Caco-2 (cell line): ENCODE measurements at regions of chr14 and their contacts with region 1.

Region 1: GRCh38 chr14:22852940-22853767 is 16.8 kb downstream of the MMP14 start:
- DNase-seq: peak; percentile 89 to 92
- H3K4me3 ChIP-seq: peak overlapping the region; percentile 35
- H3K4me3 Mint-ChIP-seq: peak overlapping the region; percentile 69
- H3K27ac Mint-ChIP-seq: peak overlapping the region; percentile 68
- H3K4me1 ChIP-seq: peaks cover 25% of the 10 kb centered on the region
- H3K4me1 Mint-ChIP-seq: peaks cover 7% of the 10 kb centered on the region
- H3K27me3 ChIP-seq: no peaks in the 10 kb centered on the region
- H3K27me3 Mint-ChIP-seq: no peaks in the 10 kb centered on the region
- CTCF ChIP-seq: peak; percentile 87 to 91

Region 2: DNA sequence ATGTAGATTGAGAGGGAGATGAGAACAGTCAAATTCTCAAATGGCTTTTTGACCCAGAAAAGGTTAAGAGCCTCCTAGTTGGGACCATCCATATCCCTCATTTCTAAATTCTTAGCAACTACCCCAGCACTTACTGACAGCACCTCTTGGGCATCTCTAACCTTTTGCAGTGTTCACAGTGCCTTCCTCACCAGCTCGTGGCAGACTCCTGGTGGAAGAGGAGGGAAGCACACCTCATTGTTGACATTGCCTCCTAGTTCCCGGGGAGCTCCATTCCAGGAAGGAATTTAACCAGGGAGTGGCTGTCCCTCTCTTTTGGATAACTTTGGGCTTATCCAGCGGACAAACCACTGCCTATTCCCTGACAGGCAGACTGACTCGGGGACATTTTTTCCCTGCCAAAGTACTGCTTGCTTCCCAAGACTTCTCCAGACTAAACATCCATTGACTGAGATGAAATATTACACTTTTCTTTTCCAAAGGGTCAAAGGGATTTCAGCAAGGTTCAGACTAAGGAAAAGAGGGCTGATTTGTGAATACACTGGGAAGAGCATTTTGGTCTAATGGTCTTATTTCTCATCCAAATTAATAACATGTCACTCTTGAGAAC is 200.0 kb before region 1 on chr14:
- CTCF ChIA-PET with region 1: interaction called, 11 read pairs
- POLR2A ChIA-PET with region 1: no interaction called
- intact Hi-C with region 1: loop called (anchors 1 kb)
- DNase-seq: peak; percentile 85 to 86
- H3K4me3 ChIP-seq: no peak overlapping the region
- H3K4me3 Mint-ChIP-seq: no peak overlapping the region
- H3K27ac Mint-ChIP-seq: peak overlapping the region; percentile 68
- H3K4me1 ChIP-seq: peaks cover 31% of the 10 kb centered on the region
- H3K4me1 Mint-ChIP-seq: peaks cover 12% of the 10 kb centered on the region
- H3K27me3 ChIP-seq: no peaks in the 10 kb centered on the region
- H3K27me3 Mint-ChIP-seq: no peaks in the 10 kb centered on the region
- CTCF ChIP-seq: peak; percentile 80 to 91

Region 3: DNA sequence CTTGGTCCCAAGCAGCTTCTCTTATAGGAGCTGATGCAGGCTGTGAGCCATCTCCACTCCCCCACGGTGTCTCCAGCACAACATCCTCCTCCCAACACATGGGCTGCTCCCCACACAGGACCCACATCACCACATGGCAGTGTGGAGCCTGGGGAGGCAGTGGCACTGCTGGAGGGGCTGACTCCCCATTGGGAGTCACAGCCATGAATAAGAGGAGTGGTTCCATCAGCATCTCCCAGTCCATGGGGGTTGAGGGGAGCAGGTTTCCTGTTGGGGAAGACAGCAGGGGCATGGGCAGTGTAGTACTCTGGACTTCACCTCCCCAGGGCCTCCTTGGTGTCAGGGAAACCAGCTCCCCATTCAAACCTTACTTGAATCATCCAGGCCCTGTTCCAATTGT is 127.1 kb before region 1 on chr14:
- CTCF ChIA-PET with region 1: no interaction called
- POLR2A ChIA-PET with region 1: no interaction called
- intact Hi-C with region 1: no loop called
- DNase-seq: no peak
- H3K4me3 ChIP-seq: no peak overlapping the region
- H3K4me3 Mint-ChIP-seq: no peak overlapping the region
- H3K27ac Mint-ChIP-seq: no peak overlapping the region
- H3K4me1 ChIP-seq: no peaks in the 10 kb centered on the region
- H3K4me1 Mint-ChIP-seq: no peaks in the 10 kb centered on the region
- H3K27me3 ChIP-seq: no peaks in the 10 kb centered on the region
- H3K27me3 Mint-ChIP-seq: no peaks in the 10 kb centered on the region
- CTCF ChIP-seq: no peak

Region 4: DNA sequence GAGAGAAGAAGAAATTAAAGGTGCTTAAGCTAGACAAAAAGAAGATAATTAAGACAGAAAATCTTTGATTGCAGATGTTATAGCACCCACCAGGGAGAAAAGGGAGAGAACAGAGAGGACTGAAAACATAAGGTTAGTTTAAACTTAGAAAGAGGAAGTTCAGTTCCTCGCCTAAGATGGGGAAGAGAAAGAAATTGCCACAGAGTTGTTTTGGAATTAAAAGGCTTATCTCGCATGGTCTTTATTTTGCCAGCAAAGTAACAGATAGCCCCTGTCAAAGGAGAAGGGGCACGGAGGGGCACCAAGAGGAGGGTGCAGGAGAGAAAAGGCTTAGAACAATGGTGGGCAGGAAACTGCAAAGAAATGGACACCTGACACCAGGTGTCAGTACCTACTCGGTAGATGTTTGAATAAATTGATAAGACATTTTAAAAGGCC is 104.5 kb before region 1 on chr14:
- CTCF ChIA-PET with region 1: no interaction called
- POLR2A ChIA-PET with region 1: no interaction called
- intact Hi-C with region 1: loop called (anchors 1 kb)
- DNase-seq: no peak
- H3K4me3 ChIP-seq: no peak overlapping the region
- H3K4me3 Mint-ChIP-seq: no peak overlapping the region
- H3K27ac Mint-ChIP-seq: no peak overlapping the region
- H3K4me1 ChIP-seq: peaks cover 20% of the 10 kb centered on the region
- H3K4me1 Mint-ChIP-seq: peaks cover 31% of the 10 kb centered on the region
- H3K27me3 ChIP-seq: no peaks in the 10 kb centered on the region
- H3K27me3 Mint-ChIP-seq: no peaks in the 10 kb centered on the region
- CTCF ChIP-seq: peak in 1 of 2 experiments; percentile 4

Region 5: GRCh38 chr14:22781586-22781991 is 71.6 kb before region 1 on chr14:
- CTCF ChIA-PET with region 1: no interaction called
- POLR2A ChIA-PET with region 1: no interaction called
- intact Hi-C with region 1: loop called (anchors 1 kb)
- DNase-seq: no peak
- H3K4me3 ChIP-seq: no peak overlapping the region
- H3K4me3 Mint-ChIP-seq: peak overlapping the region; percentile 5
- H3K27ac Mint-ChIP-seq: peak overlapping the region; percentile 30
- H3K4me1 ChIP-seq: peaks cover 14% of the 10 kb centered on the region
- H3K4me1 Mint-ChIP-seq: peaks cover 10% of the 10 kb centered on the region
- H3K27me3 ChIP-seq: no peaks in the 10 kb centered on the region
- H3K27me3 Mint-ChIP-seq: no peaks in the 10 kb centered on the region
- CTCF ChIP-seq: no peak

Region 6: GRCh38 chr14:22836301-22837113 is 16.6 kb before region 1 on chr14 and contains the start of gene MMP14:
- CTCF ChIA-PET with region 1: interaction called, 9 read pairs
- POLR2A ChIA-PET with region 1: no interaction called
- intact Hi-C with region 1: loop called (anchors 1 kb)
- DNase-seq: peak; percentile 71 to 77
- H3K4me3 ChIP-seq: peak within 1 kb of the TSS; percentile 74
- H3K4me3 Mint-ChIP-seq: peak within 1 kb of the TSS; percentile 85
- H3K27ac Mint-ChIP-seq: peak within 1 kb of the TSS; percentile 87
- H3K4me1 ChIP-seq: peaks cover 16% of the 10 kb centered on the region
- H3K4me1 Mint-ChIP-seq: peaks cover 17% of the 10 kb centered on the region
- H3K27me3 ChIP-seq: no peaks in the 10 kb centered on the region
- H3K27me3 Mint-ChIP-seq: no peaks in the 10 kb centered on the region
- CTCF ChIP-seq: peak; percentile 50 to 75
- total RNA-seq, gene MMP14: 57.2 and 62.9 TPM in 2 replicates

Region 7: DNA sequence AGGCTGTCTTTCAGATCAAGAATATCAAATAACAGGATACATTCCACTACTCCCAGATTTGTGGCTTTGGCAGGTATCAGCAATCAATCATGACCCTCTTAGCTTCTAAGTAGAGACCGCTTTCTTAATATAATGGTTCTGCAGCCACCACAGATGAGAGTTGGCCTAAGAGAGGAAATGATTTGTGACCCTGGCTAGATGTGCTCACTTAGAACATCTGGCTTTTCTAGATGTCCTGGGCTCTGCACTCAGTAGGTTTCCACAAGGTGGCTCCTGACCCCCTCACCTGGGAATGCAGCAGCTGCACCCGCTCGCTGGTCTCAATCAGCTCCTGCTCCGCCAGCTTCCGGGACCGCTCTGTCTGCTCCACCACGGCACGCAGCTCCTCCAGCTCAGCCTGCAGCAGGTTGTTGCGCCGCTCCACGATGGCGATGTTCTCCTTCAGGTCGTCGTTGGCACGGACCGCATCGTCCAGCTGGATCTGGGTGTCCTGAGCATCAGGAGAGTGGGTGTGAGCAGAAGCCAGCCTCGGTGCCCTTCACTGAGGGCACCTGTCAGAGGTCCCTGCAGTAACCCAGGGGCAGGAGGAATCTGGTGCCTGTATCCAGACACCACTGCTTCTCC is 532.6 kb after region 1 on chr14:
- CTCF ChIA-PET with region 1: no interaction called
- POLR2A ChIA-PET with region 1: no interaction called
- intact Hi-C with region 1: no loop called
- DNase-seq: peak in 1 of 2 experiments; percentile 13
- H3K4me3 ChIP-seq: no peak overlapping the region
- H3K4me3 Mint-ChIP-seq: no peak overlapping the region
- H3K27ac Mint-ChIP-seq: no peak overlapping the region
- H3K4me1 ChIP-seq: no peaks in the 10 kb centered on the region
- H3K4me1 Mint-ChIP-seq: no peaks in the 10 kb centered on the region
- H3K27me3 ChIP-seq: no peaks in the 10 kb centered on the region
- H3K27me3 Mint-ChIP-seq: peaks cover 21% of the 10 kb centered on the region
- CTCF ChIP-seq: peak in 1 of 2 experiments; percentile 17